ENCODE measurements at regions of chr6 and their contacts with region 1.

Region 1: DNA sequence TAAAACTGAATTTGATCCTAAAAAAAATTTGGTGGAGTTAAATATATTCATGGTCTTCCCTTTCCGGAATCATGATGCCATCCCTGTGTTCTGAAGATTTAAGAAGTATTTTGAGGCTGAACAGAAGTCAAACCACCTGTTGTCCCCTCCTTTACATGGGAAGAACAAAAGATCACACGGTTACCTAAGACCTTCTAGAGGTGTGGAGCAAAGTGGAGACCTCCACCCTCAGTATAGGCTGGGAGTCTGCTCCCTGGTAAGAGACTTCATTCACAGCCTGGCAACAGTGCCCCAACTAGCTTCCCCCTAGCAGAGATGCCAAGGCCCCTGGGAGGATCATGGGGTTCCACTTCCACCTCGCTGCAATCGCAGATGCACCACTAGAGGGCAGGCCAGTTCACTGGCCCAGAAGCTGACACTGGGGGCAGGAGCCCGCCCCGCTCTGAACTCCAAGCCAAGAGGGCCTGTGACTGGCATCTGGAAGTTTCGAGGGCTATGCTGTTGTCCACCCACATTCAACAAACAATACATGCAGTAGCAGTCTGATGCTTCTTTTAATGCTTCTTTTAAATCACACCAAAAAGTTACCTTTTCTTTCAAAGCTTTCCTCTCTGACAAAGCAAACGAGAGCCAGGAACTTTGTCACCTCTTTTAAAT is 19.5 kb upstream of the UBE2J1 start:
- DNase-seq: peak; percentile 85
- H3K4me3 Mint-ChIP-seq: no peak overlapping the region
- H3K27ac Mint-ChIP-seq: no peak overlapping the region
- H3K4me1 Mint-ChIP-seq: peaks cover 16% of the 10 kb centered on the region
- H3K27me3 Mint-ChIP-seq: no peaks in the 10 kb centered on the region

Region 2: GRCh38 chr6:87653074-87653962 is 1718.7 kb before region 1 on chr6:
- CTCF ChIA-PET with region 1: no interaction called
- POLR2A ChIA-PET with region 1: no interaction called
- intact Hi-C with region 1: no loop called
- DNase-seq: peak; percentile 26
- H3K4me3 Mint-ChIP-seq: no peak overlapping the region
- H3K27ac Mint-ChIP-seq: peak overlapping the region; percentile 60
- H3K4me1 Mint-ChIP-seq: peaks cover 33% of the 10 kb centered on the region
- H3K27me3 Mint-ChIP-seq: no peaks in the 10 kb centered on the region

Region 3: DNA sequence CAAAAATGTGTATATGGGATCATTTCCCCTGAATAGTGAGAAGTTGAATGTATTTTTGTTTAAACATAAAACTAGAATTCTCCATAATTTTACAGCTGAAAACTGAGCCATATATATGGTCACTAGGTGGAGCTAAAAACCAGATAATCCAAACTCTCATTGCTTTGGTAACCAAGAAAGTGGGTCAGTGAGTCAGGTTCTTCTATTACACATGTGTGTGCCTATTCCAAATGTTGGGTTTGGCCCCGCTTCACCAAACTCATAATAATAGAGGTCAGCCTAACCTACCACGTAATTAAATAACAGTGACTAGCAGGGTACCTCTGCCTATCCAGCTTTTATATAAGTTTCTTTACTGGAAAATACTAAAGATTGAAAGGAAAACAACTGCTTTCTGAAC is 389.3 kb before region 1 on chr6:
- CTCF ChIA-PET with region 1: interaction called, 28 read pairs
- POLR2A ChIA-PET with region 1: no interaction called
- intact Hi-C with region 1: no loop called
- DNase-seq: peak; percentile 33
- H3K4me3 Mint-ChIP-seq: no peak overlapping the region
- H3K27ac Mint-ChIP-seq: no peak overlapping the region
- H3K4me1 Mint-ChIP-seq: no peaks in the 10 kb centered on the region
- H3K27me3 Mint-ChIP-seq: no peaks in the 10 kb centered on the region

Region 4: DNA sequence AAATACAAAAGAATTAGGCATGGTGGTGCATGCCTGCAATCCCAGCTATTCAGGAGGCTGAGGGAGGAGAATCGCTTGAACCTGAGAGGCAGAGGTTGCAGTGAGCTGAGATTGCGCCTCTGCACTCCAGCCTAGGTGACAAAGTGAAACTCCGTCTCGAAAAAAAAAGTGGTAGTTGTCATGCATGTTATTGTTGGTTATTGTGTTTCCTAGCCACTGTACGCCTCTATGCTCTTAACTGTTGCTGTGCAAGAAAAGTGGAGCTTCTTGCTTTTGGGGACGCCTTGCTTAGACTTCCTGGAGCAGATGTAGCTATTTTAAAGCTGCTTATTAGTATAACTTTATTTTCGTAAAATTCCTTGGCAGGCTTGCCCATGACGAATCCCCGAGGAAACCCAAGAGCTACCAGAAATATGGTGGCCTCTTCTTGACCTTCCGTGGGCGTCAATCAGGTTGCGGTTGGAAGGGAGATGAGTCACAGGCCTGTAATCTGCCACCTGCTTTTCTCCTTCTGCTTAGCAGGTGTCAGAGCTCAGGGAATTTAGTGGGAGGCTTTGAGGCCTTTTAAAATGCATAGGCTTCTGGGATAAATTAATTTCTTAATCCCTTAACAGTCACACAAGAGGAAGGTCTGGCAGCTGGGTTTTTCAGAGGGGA is 74.2 kb before region 1 on chr6:
- CTCF ChIA-PET with region 1: interaction called, 12 read pairs
- POLR2A ChIA-PET with region 1: no interaction called
- intact Hi-C with region 1: no loop called
- DNase-seq: peak; percentile 91
- H3K4me3 Mint-ChIP-seq: peak overlapping the region; percentile 59
- H3K27ac Mint-ChIP-seq: peak overlapping the region; percentile 78
- H3K4me1 Mint-ChIP-seq: peaks cover 26% of the 10 kb centered on the region
- H3K27me3 Mint-ChIP-seq: no peaks in the 10 kb centered on the region

Region 5: GRCh38 chr6:89360415-89360999 is 11.5 kb before region 1 on chr6:
- CTCF ChIA-PET with region 1: interaction called, 37 read pairs
- POLR2A ChIA-PET with region 1: no interaction called
- intact Hi-C with region 1: no loop called
- DNase-seq: no peak
- H3K4me3 Mint-ChIP-seq: no peak overlapping the region
- H3K27ac Mint-ChIP-seq: peak overlapping the region; percentile 58
- H3K4me1 Mint-ChIP-seq: peaks cover 51% of the 10 kb centered on the region
- H3K27me3 Mint-ChIP-seq: no peaks in the 10 kb centered on the region

Region 6: GRCh38 chr6:89432875-89433251 is 60.9 kb after region 1 on chr6 and contains the start of gene ANKRD6:
- CTCF ChIA-PET with region 1: interaction called, 17 read pairs
- POLR2A ChIA-PET with region 1: no interaction called
- intact Hi-C with region 1: loop called (anchors 2 kb)
- DNase-seq: peak; percentile 85
- H3K4me3 Mint-ChIP-seq: peak within 1 kb of the TSS; percentile 69
- H3K27ac Mint-ChIP-seq: peak within 1 kb of the TSS; percentile 30
- H3K4me1 Mint-ChIP-seq: peaks cover 21% of the 10 kb centered on the region
- H3K27me3 Mint-ChIP-seq: peaks cover 1% of the 10 kb centered on the region
- total RNA-seq, gene ANKRD6: 3.1 to 4.0 TPM

Region 7: DNA sequence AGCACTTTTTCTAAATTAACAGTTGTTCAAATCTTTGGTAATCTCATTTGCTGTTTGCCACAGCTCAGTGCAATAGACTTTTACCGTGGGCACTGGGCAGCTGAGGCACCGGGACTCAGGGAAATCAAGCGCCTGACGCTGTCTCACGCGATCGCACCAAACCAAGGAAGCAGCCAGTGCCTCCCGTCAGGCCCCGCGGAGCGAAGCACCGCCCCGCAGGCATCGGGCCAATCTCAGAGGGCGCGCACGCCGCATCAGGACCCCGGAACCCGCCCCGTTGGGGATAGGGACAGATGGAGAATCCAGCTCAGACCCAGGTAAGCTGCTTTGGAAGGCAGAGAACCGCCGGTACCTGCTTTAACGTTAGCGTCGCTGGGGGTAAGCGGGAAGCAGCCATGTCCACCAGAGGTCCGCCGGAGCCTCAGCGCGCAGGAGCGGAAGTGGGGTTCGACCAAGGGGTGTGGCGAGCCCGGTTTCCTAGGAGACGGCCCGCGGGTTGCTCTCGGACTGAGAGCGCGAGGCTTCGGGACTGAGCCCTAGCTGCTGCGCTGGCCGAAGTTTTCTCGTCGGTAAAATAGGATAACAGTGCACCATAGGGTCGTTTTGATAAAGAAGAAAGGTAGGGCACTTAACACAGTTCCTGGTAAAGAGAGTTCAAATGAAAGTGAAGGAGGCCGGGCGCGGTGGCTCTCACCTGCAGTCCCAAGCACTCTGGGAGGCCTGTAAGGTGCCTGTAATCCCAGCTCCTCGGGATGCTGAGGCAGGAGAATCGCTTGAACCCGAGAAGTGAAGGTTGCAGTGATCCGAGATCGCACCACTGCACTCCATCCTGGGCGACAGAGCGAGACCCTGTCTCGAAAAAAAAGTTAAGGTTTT is 266.6 kb after region 1 on chr6 and contains the start of gene LYRM2:
- CTCF ChIA-PET with region 1: interaction called, 10 read pairs
- POLR2A ChIA-PET with region 1: interaction called, 3 read pairs
- intact Hi-C with region 1: no loop called
- DNase-seq: peak; percentile 95
- H3K4me3 Mint-ChIP-seq: peak within 1 kb of the TSS; percentile 81
- H3K27ac Mint-ChIP-seq: peak within 1 kb of the TSS; percentile 96
- H3K4me1 Mint-ChIP-seq: peaks cover 32% of the 10 kb centered on the region
- H3K27me3 Mint-ChIP-seq: no peaks in the 10 kb centered on the region
- total RNA-seq, gene LYRM2: 25.5 to 26.4 TPM

Measured in activated CD4-positive, alpha-beta memory T cell treated with anti-CD3 and anti-CD28 coated beads for 36 hours (primary cell).